ENCODE measurements at regions of chr6 and their contacts with region 1.

Region 1: DNA sequence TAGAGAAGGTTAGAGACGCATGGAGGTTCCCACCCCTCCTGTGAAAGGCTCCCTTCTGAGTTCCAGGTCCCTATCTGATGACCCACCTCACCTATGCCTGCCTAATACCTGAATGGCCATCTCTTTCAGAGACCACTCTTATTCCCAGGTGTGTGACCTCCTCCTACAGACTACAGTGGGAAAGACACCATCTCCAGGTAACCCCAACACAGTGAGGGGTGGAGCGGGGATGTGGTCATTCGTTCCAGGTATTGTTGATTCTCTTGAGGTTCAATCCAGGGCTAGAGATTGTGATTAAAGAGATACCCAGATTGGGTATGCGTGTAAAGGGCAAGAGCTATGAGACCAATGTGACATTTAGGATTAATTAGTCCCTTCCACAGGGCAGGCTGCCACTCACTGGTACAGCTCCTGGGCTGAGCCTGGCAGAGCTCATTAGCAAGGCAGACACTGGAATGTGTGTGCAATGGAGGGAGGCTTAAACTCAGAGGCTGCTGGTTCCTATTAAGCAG is 46.5 kb upstream of the IER3 start:
- DNase-seq: no peak
- H3K4me3 ChIP-seq: no peak overlapping the region
- H3K27ac ChIP-seq: no peak overlapping the region
- H3K4me1 ChIP-seq: peaks cover 4% of the 10 kb centered on the region
- H3K27me3 ChIP-seq: no peaks in the 10 kb centered on the region
- CTCF ChIP-seq: no peak

Region 2: DNA sequence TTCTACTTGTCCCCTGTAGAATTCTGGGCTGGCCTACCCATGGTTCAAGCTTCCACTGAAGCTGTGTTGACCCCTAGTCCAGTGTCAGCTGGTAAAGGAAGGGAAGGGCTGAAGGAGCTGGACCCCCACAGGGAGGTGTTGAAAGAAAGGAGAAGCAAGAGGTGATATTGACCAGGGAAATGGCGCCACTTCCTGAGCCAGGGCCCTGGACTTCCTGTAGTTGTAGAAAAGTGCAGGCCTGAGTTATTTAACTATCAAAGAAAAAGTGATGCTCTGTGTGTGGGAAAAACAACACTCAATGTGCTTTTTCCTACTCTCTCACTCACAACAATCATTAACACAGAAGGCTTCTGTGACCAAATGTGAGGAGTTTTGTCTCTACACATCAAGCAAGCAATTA is 13.5 kb after region 1 on chr6:
- CTCF ChIA-PET with region 1: no interaction called
- dilution Hi-C with region 1: no loop called
- in situ Hi-C with region 1: no loop called
- intact Hi-C with region 1: loop called (anchors 2 kb)
- DNase-seq: no peak
- H3K4me3 ChIP-seq: no peak overlapping the region
- H3K27ac ChIP-seq: no peak overlapping the region
- H3K4me1 ChIP-seq: no peaks in the 10 kb centered on the region
- H3K27me3 ChIP-seq: no peaks in the 10 kb centered on the region
- CTCF ChIP-seq: no peak

Region 3: GRCh38 chr6:30883685-30884520 is 93.1 kb after region 1 on chr6 and contains the start of gene DDR1:
- CTCF ChIA-PET with region 1: no interaction called
- dilution Hi-C with region 1: no loop called
- in situ Hi-C with region 1: no loop called
- intact Hi-C with region 1: no loop called
- DNase-seq: peak; percentile 89
- H3K4me3 ChIP-seq: peak within 1 kb of the TSS; percentile 60 to 76 (median 73)
- H3K27ac ChIP-seq: peak within 1 kb of the TSS; percentile 95
- H3K4me1 ChIP-seq: peaks cover 58% of the 10 kb centered on the region
- H3K27me3 ChIP-seq: no peaks in the 10 kb centered on the region
- CTCF ChIP-seq: no peak
- total RNA-seq, gene DDR1: 192 to 315 TPM

Measured in mammary epithelial cell (primary cell).